IMR-90 (cell line): ENCODE measurements at regions of chr2 and their contacts with region 1.

Region 1: DNA sequence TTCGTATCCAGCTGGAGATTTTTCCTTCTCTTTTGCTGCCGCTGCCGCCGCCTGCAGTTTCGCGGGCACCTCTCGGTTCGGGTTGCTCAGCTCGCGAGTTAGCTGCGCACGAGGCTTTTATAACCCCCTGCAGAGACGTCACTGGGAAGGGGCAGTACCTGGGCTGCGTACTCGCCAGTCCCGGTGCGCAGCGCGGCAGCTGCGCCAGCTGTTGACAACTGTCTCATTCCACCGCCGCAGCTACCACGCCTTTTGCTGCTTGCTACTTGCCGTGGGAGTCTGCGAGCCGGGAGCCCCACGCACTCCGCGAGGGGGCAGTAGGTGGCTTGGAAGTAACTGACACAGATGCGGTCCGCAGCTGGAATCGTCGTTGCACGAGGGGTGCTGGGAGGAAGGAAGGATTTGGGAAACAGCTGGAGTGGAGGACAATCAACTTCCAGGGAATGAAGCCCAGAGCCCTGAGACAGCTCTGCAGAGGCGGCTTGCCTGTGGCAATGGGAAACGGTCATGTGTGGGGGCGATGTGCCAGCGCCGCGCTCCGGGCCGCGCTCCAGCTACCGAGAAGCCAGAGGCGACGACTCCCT is at the start of gene TACR1:
- DNase-seq: peak; percentile 73
- ATAC-seq: peak; percentile 86
- H3K4me3 ChIP-seq: peak within 1 kb of the TSS; percentile 43
- H3K27ac ChIP-seq: no peak within 1 kb of the TSS
- H3K4me1 ChIP-seq: no peaks in the 10 kb centered on the region
- H3K27me3 ChIP-seq: peaks cover 35% of the 10 kb centered on the region
- CTCF ChIP-seq: peak; percentile 72
- POLR2A ChIP-seq: no peak
- RAD21 ChIP-seq: peak; percentile 77
- total RNA-seq, gene TACR1: under 0.01 TPM in 2 replicates

Region 2: DNA sequence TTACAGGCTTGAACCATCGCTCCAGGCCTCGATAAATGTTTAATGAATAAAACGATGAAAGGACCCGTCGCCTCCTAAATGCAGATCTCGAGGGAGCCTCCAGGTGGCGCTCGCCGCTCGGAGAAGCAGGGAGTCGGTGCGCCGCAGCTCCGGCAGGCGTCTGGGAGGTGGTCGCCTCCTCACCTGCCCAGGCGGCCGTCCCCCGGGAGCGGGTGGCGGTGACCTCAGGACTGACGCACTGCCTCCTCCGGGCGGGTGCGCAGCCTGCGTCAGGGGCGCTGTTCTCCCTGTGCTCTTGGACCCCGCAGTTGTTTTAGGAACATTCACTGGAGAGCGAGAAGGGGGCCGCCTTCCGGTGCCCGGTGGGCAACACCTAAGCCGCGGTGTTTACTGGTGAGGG is 279.7 kb before region 1 on chr2:
- CTCF ChIA-PET with region 1: no interaction called
- POLR2A ChIA-PET with region 1: no interaction called
- dilution Hi-C with region 1: no loop called
- in situ Hi-C with region 1: no loop called
- intact Hi-C with region 1: loop called (anchors 1 kb)
- DNase-seq: peak; percentile 48
- ATAC-seq: peak; percentile 58
- H3K4me3 ChIP-seq: peak overlapping the region; percentile 42
- H3K27ac ChIP-seq: no peak overlapping the region
- H3K4me1 ChIP-seq: peaks cover 17% of the 10 kb centered on the region
- H3K27me3 ChIP-seq: no peaks in the 10 kb centered on the region
- CTCF ChIP-seq: peak; percentile 83
- POLR2A ChIP-seq: no peak
- RAD21 ChIP-seq: peak; percentile 88

Region 3: GRCh38 chr2:75186821-75187220 is 12.7 kb before region 1 on chr2:
- CTCF ChIA-PET with region 1: interaction called, 17 read pairs
- POLR2A ChIA-PET with region 1: no interaction called
- dilution Hi-C with region 1: no loop called
- in situ Hi-C with region 1: no loop called
- intact Hi-C with region 1: no loop called
- DNase-seq: no peak
- ATAC-seq: no peak
- H3K4me3 ChIP-seq: no peak overlapping the region
- H3K27ac ChIP-seq: no peak overlapping the region
- H3K4me1 ChIP-seq: no peaks in the 10 kb centered on the region
- H3K27me3 ChIP-seq: no peaks in the 10 kb centered on the region; the same call in none of the 2 replicates
- CTCF ChIP-seq: no peak
- POLR2A ChIP-seq: no peak
- RAD21 ChIP-seq: no peak

Region 4: DNA sequence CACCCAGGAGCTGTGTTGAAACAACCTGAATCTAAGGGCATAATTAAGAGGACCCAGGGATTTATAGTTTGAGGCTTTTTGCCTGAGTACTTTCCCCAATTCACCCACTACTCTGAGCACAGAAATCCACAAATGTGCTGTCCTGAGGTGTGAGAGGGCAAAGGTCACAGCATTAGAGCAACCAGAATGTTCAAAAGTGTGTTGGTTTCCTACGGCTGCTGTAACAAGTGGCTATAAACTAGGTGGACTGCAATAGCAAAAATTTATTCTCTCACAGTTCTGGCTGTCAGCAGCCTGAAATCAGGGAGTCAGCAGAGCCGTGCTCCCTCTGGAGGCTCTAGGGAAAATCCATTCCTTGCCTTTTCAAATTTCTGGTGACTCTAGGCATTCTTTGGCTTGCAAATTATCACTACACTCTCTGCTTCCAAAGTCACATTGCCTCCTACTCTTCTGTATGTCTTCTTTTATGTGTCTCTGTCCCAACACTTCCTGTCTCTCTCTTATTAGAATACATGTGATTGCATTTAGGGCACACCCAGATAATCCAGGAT is 91.2 kb after region 1 on chr2:
- CTCF ChIA-PET with region 1: interaction called, 10 read pairs
- POLR2A ChIA-PET with region 1: no interaction called
- dilution Hi-C with region 1: no loop called
- in situ Hi-C with region 1: no loop called
- intact Hi-C with region 1: loop called (anchors 1 kb)
- DNase-seq: peak; percentile 45
- ATAC-seq: peak; percentile 79
- H3K4me3 ChIP-seq: no peak overlapping the region
- H3K27ac ChIP-seq: no peak overlapping the region
- H3K4me1 ChIP-seq: peaks cover 8% of the 10 kb centered on the region; the same call in 1 of the 2 replicates
- H3K27me3 ChIP-seq: no peaks in the 10 kb centered on the region
- CTCF ChIP-seq: peak; percentile 51
- POLR2A ChIP-seq: no peak
- RAD21 ChIP-seq: peak; percentile 54

Region 5: GRCh38 chr2:75324133-75324532 is 124.6 kb after region 1 on chr2:
- CTCF ChIA-PET with region 1: no interaction called
- POLR2A ChIA-PET with region 1: no interaction called
- dilution Hi-C with region 1: no loop called
- in situ Hi-C with region 1: no loop called
- intact Hi-C with region 1: no loop called
- DNase-seq: peak; percentile 8
- ATAC-seq: no peak
- H3K4me3 ChIP-seq: no peak overlapping the region
- H3K27ac ChIP-seq: no peak overlapping the region
- H3K4me1 ChIP-seq: peaks cover 3% of the 10 kb centered on the region; the same call in 1 of the 2 replicates
- H3K27me3 ChIP-seq: peaks cover 4% of the 10 kb centered on the region
- CTCF ChIP-seq: no peak
- POLR2A ChIP-seq: no peak
- RAD21 ChIP-seq: no peak

Region 6: GRCh38 chr2:75608684-75609333 is 409.3 kb after region 1 on chr2:
- CTCF ChIA-PET with region 1: interaction called, 4 read pairs
- POLR2A ChIA-PET with region 1: no interaction called
- dilution Hi-C with region 1: no loop called
- in situ Hi-C with region 1: loop called (anchors 25 kb)
- intact Hi-C with region 1: loop called (anchors 5 kb)
- DNase-seq: peak; percentile 47
- ATAC-seq: peak; percentile 67
- H3K4me3 ChIP-seq: peak overlapping the region; percentile 22; the same call in 1 of the 2 replicates
- H3K27ac ChIP-seq: no peak overlapping the region
- H3K4me1 ChIP-seq: peaks cover 13% of the 10 kb centered on the region
- H3K27me3 ChIP-seq: peaks cover 24% of the 10 kb centered on the region
- CTCF ChIP-seq: peak; percentile 89
- POLR2A ChIP-seq: peak; percentile 34; the same call in 1 of the 2 replicates
- RAD21 ChIP-seq: peak; percentile 95